Activated naive CD4-positive, alpha-beta T cell treated with anti-CD3 and anti-CD28 coated beads for 36 hours (primary cell): ENCODE measurements at regions of chr17 and their contacts with region 1.

Region 1: DNA sequence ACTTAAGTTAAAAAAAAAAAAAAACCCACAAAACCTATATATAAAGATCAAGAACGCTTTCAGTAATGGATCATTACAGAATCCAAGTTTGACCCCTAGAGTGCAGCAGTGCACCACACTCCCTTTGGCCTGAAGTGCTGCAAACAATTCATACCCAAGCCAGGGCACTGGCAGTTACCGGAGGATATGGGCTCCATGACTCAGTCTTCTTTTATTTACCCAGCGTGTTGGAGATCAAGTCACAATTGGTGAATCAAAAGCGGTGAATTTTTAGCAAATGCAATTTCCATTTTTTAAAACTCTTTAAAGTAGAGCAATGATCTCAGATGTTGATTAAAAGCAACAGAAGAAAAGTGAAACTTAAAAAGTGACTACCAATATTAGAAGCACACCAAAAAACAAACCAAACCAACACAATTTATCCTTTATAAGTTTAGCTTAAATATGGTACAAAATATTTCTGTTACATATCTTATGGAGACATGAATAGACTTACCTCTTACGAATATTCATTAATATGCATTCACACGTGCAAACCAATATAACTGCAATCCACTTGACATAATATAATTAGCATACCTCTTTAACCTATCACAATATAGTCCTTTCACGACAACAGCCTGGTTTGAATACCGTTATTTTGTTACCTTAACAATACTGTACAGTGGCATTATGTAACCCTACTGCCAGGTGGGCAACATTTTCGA is 46.3 kb downstream of the ZNF652 start:
- DNase-seq: peak; percentile 91
- H3K4me3 Mint-ChIP-seq: peak overlapping the region; percentile 41
- H3K27ac Mint-ChIP-seq: peak overlapping the region; percentile 62
- H3K4me1 Mint-ChIP-seq: peaks cover 23% of the 10 kb centered on the region
- H3K27me3 Mint-ChIP-seq: no peaks in the 10 kb centered on the region

Region 2: GRCh38 chr17:49399995-49400394 is 84.3 kb after region 1 on chr17:
- CTCF ChIA-PET with region 1: interaction called, 22 read pairs
- intact Hi-C with region 1: loop called (anchors 1 kb)
- DNase-seq: no peak
- H3K4me3 Mint-ChIP-seq: no peak overlapping the region
- H3K27ac Mint-ChIP-seq: no peak overlapping the region
- H3K4me1 Mint-ChIP-seq: peaks cover under 1% of the 10 kb centered on the region
- H3K27me3 Mint-ChIP-seq: no peaks in the 10 kb centered on the region

Region 3: GRCh38 chr17:49414622-49415350 is 99.1 kb after region 1 on chr17 and contains the start of gene PHB1:
- CTCF ChIA-PET with region 1: no interaction called
- intact Hi-C with region 1: loop called (anchors 1 kb)
- DNase-seq: peak; percentile 99
- H3K4me3 Mint-ChIP-seq: peak within 1 kb of the TSS; percentile 100
- H3K27ac Mint-ChIP-seq: peak within 1 kb of the TSS; percentile 78
- H3K4me1 Mint-ChIP-seq: peaks cover 32% of the 10 kb centered on the region
- H3K27me3 Mint-ChIP-seq: no peaks in the 10 kb centered on the region
- total RNA-seq, gene PHB1: 390 to 404 TPM